ENCODE measurements at regions of chr20 and their contacts with region 1.

Region 1: GRCh38 chr20:32681175-32682084 is 7.7 kb upstream of the C20orf203 start:
- DNase-seq: no peak
- ATAC-seq: peak; percentile 47
- H3K4me3 ChIP-seq: peak overlapping the region; percentile 23 to 71 (median 48)
- H3K27ac ChIP-seq: peak overlapping the region; percentile 35
- H3K4me1 ChIP-seq: peaks cover 89% of the 10 kb centered on the region
- H3K27me3 ChIP-seq: no peaks in the 10 kb centered on the region
- CTCF ChIP-seq: peak; percentile 25; the same call in 1 of the 2 replicates
- EP300 ChIP-seq: 0 out of 4 replicates have a peak, but pooled peaks of 1 of the 2 experiments have one; percentile 10
- POLR2A ChIP-seq: peak in 1 of 2 experiments; percentile 37; a peak in 1 of 4 replicates
- RAD21 ChIP-seq: no peak

Region 2: GRCh38 chr20:32636283-32636682 is 45.1 kb before region 1 on chr20:
- CTCF ChIA-PET with region 1: no interaction called
- POLR2A ChIA-PET with region 1: no interaction called
- in situ Hi-C with region 1: no loop called
- intact Hi-C with region 1: no loop called
- DNase-seq: no peak
- ATAC-seq: peak; percentile 6; the same call in 1 of the 3 replicates
- H3K4me3 ChIP-seq: no peak overlapping the region
- H3K27ac ChIP-seq: no peak overlapping the region
- H3K4me1 ChIP-seq: peaks cover 18% of the 10 kb centered on the region
- H3K27me3 ChIP-seq: peaks cover 11 to 86% of the 10 kb centered on the region in 2 experiments
- CTCF ChIP-seq: no peak
- EP300 ChIP-seq: no peak
- POLR2A ChIP-seq: no peak
- RAD21 ChIP-seq: no peak

Region 3: GRCh38 chr20:32664678-32665159 is 16.7 kb before region 1 on chr20:
- CTCF ChIA-PET with region 1: no interaction called
- POLR2A ChIA-PET with region 1: interaction called, 11 read pairs
- in situ Hi-C with region 1: no loop called
- intact Hi-C with region 1: no loop called
- DNase-seq: peak; percentile 54
- ATAC-seq: peak; percentile 81
- H3K4me3 ChIP-seq: peak overlapping the region; percentile 0 to 59 (median 5); a peak in 5 of 6 replicates
- H3K27ac ChIP-seq: peak overlapping the region; percentile 7
- H3K4me1 ChIP-seq: peaks cover 51% of the 10 kb centered on the region
- H3K27me3 ChIP-seq: 0 out of 5 replicates have a peak, but pooled peaks cover 0 to 3% of the 10 kb centered on the region in 2 experiments
- CTCF ChIP-seq: no peak
- EP300 ChIP-seq: no peak
- POLR2A ChIP-seq: no peak
- RAD21 ChIP-seq: no peak

Region 4: GRCh38 chr20:32718731-32719348 is 37.4 kb after region 1 on chr20:
- CTCF ChIA-PET with region 1: no interaction called
- POLR2A ChIA-PET with region 1: no interaction called
- in situ Hi-C with region 1: no loop called
- intact Hi-C with region 1: loop called (anchors 2 kb)
- DNase-seq: no peak
- ATAC-seq: no peak
- H3K4me3 ChIP-seq: no peak overlapping the region
- H3K27ac ChIP-seq: no peak overlapping the region
- H3K4me1 ChIP-seq: peaks cover 8% of the 10 kb centered on the region
- H3K27me3 ChIP-seq: no peaks in the 10 kb centered on the region
- CTCF ChIP-seq: no peak
- EP300 ChIP-seq: no peak
- POLR2A ChIP-seq: no peak
- RAD21 ChIP-seq: no peak

Region 5: DNA sequence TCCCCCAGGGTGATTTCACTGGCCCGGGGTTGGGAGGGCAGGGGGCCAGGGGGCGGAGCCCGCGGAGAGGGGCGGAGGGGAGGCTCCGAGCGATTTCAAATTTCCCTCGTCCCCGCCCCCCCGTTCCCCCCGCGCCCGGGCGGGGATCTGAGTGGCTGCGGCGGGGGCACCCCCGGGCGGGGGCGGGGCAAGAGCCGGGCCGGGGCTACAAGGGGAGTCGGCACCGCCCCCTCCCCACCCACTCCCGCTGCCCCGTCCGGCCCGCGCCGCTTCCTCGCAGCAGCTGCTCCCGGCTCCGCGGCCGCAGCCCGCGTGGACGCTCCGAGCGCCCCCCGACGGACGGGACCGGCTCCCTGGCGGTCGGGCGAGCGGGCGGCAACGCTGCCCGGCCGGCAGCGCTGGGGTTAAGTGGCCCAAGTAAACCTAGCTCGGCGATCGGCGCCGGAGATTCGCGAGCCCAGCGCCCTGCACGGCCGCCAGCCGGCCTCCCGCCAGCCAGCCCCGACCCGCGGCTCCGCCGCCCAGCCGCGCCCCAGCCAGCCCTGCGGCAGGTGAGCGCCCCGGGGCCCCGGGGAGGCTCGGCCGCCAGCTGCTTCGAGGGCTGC is 80.8 kb after region 1 on chr20 and contains the start of gene DNMT3B:
- CTCF ChIA-PET with region 1: no interaction called
- POLR2A ChIA-PET with region 1: interaction called, 11 read pairs
- in situ Hi-C with region 1: no loop called
- intact Hi-C with region 1: no loop called
- DNase-seq: peak; percentile 60
- ATAC-seq: peak; percentile 79
- H3K4me3 ChIP-seq: peak within 1 kb of the TSS; percentile 75 to 95 (median 95)
- H3K27ac ChIP-seq: peak within 1 kb of the TSS; percentile 24
- H3K4me1 ChIP-seq: peaks cover 62% of the 10 kb centered on the region
- H3K27me3 ChIP-seq: no peaks in the 10 kb centered on the region; a peak in 1 of 5 replicates
- CTCF ChIP-seq: peak; percentile 49; the same call in 1 of the 2 replicates
- EP300 ChIP-seq: no peak
- POLR2A ChIP-seq: peak; percentile 25 to 76; a peak in 2 of 4 replicates
- RAD21 ChIP-seq: peak; percentile 95
- total RNA-seq, gene DNMT3B: 13.2 and 13.9 TPM in 2 replicates

Measured in HepG2 (cell line).